PC-3 (cell line): ENCODE measurements at regions of chr1 and their contacts with region 1.

Region 1: DNA sequence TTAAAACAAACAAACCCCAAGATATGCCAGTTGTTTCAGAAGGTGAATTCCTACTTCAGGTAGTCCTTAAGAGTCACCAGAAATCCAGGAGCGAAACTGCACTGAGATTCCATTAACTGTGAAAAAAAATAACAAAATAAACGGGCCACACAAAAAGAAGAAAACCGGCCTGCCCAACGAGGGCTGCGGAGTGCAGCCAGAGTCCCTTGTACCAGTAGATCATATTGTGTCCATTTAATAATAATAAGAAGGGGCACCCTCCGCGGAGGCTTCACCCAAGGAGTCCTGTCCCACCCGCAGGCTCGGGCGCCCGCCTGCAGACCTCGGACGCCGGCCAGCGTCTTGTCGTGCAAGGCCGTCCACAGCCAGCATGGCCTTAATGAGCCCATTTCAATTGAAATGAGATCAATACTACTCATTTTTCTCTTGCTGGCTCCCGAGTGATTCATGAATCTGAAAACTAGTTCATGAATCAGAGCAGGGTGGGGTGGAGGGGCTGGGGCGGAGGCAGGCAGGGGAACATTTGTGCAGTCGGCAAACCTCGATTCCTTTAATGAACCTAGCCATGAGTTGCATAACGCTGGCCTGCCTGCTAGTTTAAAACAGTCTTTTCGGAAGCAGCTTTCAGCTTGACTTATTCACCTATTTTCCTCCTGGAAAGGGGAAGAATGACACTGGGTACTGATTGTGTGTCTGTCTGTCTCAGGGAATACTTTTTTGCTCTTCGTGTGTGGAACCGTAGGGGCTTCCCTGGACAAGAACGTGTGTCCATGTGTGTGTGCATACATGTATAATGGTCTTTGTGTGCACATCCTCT is 113.1 kb upstream of the IRF2BP2 start:
- DNase-seq: peak; percentile 73
- ATAC-seq: peak; percentile 14
- H3K4me3 ChIP-seq: peak overlapping the region; percentile 52
- H3K27ac ChIP-seq: peak overlapping the region; percentile 99
- H3K4me1 ChIP-seq: peaks cover 57% of the 10 kb centered on the region
- H3K27me3 ChIP-seq: no peaks in the 10 kb centered on the region
- CTCF ChIP-seq: no peak

Region 2: GRCh38 chr1:234610348-234611152 is 112.6 kb before region 1 on chr1:
- CTCF ChIA-PET with region 1: no interaction called
- POLR2A ChIA-PET with region 1: interaction called, 45 read pairs
- intact Hi-C with region 1: loop called (anchors 2 kb)
- DNase-seq: peak; percentile 84
- ATAC-seq: peak; percentile 55
- H3K4me3 ChIP-seq: peak overlapping the region; percentile 68
- H3K27ac ChIP-seq: peak overlapping the region; percentile 97
- H3K4me1 ChIP-seq: peaks cover 33% of the 10 kb centered on the region
- H3K27me3 ChIP-seq: no peaks in the 10 kb centered on the region
- CTCF ChIP-seq: no peak

Region 3: GRCh38 chr1:234710936-234711724 is 12.0 kb before region 1 on chr1:
- CTCF ChIA-PET with region 1: no interaction called
- POLR2A ChIA-PET with region 1: interaction called, 24 read pairs
- intact Hi-C with region 1: no loop called
- DNase-seq: no peak
- ATAC-seq: no peak
- H3K4me3 ChIP-seq: no peak overlapping the region
- H3K27ac ChIP-seq: no peak overlapping the region
- H3K4me1 ChIP-seq: peaks cover 8% of the 10 kb centered on the region; the same call in 1 of the 2 replicates
- H3K27me3 ChIP-seq: no peaks in the 10 kb centered on the region
- CTCF ChIP-seq: no peak

Region 4: DNA sequence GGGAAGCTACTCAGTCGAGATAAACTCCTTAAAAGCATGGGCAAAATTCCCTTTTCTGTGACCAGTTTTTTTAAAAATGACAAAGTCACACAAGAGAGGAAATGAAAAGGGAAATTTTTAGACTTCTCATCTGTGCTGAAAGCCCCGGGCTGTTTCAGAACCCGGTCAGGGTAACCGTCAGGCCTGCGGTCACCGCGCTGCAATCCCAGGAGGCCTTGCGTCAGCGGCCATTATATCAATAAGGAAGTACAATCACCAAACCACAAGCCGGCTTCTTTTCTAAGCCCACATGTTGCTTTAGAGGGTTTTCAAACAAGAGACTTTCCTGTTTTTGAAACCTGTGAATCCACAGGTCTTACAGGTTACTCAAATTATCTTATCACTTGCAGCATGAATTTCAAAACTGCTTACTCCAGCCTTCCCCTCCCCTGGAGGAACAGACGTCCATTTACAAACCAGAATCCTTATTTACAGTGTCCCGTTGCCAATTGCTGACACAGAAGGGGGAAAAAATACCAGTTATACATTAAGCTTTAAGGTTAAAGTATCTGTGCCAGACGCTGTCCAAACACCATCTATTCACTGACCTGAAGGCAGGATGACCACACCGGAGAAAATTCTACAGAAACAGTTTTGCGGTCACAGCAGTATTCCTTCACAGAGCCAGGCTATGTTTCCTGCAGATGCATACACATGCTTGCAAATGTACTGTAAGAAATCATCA is 240.2 kb after region 1 on chr1:
- CTCF ChIA-PET with region 1: no interaction called
- POLR2A ChIA-PET with region 1: no interaction called
- intact Hi-C with region 1: loop called (anchors 5 kb)
- DNase-seq: peak; percentile 87
- ATAC-seq: peak; percentile 50
- H3K4me3 ChIP-seq: peak overlapping the region; percentile 41; the same call in 1 of the 2 replicates
- H3K27ac ChIP-seq: peak overlapping the region; percentile 100
- H3K4me1 ChIP-seq: peaks cover 67% of the 10 kb centered on the region
- H3K27me3 ChIP-seq: no peaks in the 10 kb centered on the region
- CTCF ChIP-seq: no peak

Region 5: GRCh38 chr1:234997201-234997895 is 274.2 kb after region 1 on chr1:
- CTCF ChIA-PET with region 1: no interaction called
- POLR2A ChIA-PET with region 1: interaction called, 21 read pairs
- intact Hi-C with region 1: no loop called
- DNase-seq: peak; percentile 98
- ATAC-seq: peak; percentile 67
- H3K4me3 ChIP-seq: peak overlapping the region; percentile 58
- H3K27ac ChIP-seq: peak overlapping the region; percentile 100
- H3K4me1 ChIP-seq: peaks cover 28% of the 10 kb centered on the region
- H3K27me3 ChIP-seq: no peaks in the 10 kb centered on the region
- CTCF ChIP-seq: no peak

Region 6: GRCh38 chr1:235093696-235094592 is 370.8 kb after region 1 on chr1:
- CTCF ChIA-PET with region 1: no interaction called
- POLR2A ChIA-PET with region 1: no interaction called
- intact Hi-C with region 1: no loop called
- DNase-seq: peak; percentile 73
- ATAC-seq: peak; percentile 87
- H3K4me3 ChIP-seq: no peak overlapping the region
- H3K27ac ChIP-seq: no peak overlapping the region
- H3K4me1 ChIP-seq: 0 out of 2 replicates have a peak, but pooled peaks cover 5% of the 10 kb centered on the region
- H3K27me3 ChIP-seq: no peaks in the 10 kb centered on the region
- CTCF ChIP-seq: peak; percentile 85